ENCODE measurements at regions of chr14 and their contacts with region 1.

Region 1: GRCh38 chr14:91911474-91912032 is 35.9 kb downstream of the FBLN5 start:
- DNase-seq: peak in 4 of 5 donors; percentile 60 to 71 (median 64)
- H3K4me3 ChIP-seq: no peak overlapping the region
- H3K4me3 Mint-ChIP-seq: peak overlapping the region in 2 of 8 donors; percentile 20 to 29
- H3K27ac ChIP-seq: no peak overlapping the region
- H3K27ac Mint-ChIP-seq: peak overlapping the region in 4 of 7 donors; percentile 70 to 82 (median 82)
- H3K4me1 ChIP-seq: peaks cover 8% of the 10 kb centered on the region
- H3K4me1 Mint-ChIP-seq: peaks cover 11 to 13% (median 11%) of the 10 kb centered on the region in 4 donors
- H3K27me3 ChIP-seq: no peaks in the 10 kb centered on the region
- H3K27me3 Mint-ChIP-seq: peaks cover 1 to 5% of the 10 kb centered on the region in 2 donors

Region 2: GRCh38 chr14:91536327-91536726 is 375.2 kb before region 1 on chr14:
- CTCF ChIA-PET with region 1: no interaction called
- POLR2A ChIA-PET with region 1: no interaction called
- intact Hi-C with region 1: no loop called
- DNase-seq: no peak
- H3K4me3 ChIP-seq: no peak overlapping the region
- H3K4me3 Mint-ChIP-seq: no peak overlapping the region
- H3K27ac ChIP-seq: no peak overlapping the region
- H3K27ac Mint-ChIP-seq: no peak overlapping the region
- H3K4me1 ChIP-seq: no peaks in the 10 kb centered on the region
- H3K4me1 Mint-ChIP-seq: no peaks in the 10 kb centered on the region
- H3K27me3 ChIP-seq: no peaks in the 10 kb centered on the region
- H3K27me3 Mint-ChIP-seq: peaks cover 5 to 12% of the 10 kb centered on the region in 2 donors

Region 3: DNA sequence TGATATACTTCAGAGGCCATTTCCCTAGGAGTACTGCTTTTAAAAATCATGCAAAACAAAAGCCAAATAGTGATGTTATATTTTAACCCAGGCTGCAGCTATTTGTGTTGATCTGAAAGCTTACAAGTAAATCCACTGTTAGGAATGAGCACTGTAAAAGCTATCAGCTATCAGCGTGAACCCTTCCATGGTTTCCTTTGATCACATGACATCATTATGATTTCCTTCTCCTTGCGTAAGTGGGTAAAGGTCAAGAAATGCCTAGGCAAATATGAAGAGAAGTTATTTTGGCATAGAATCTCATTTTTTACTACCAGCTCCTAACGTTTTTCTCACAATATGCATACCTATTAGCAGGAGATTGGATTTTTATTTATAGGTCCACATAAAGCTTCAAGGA is 131.1 kb before region 1 on chr14:
- CTCF ChIA-PET with region 1: interaction called, 33 read pairs
- POLR2A ChIA-PET with region 1: no interaction called
- intact Hi-C with region 1: loop called (anchors 5 kb)
- DNase-seq: no peak
- H3K4me3 ChIP-seq: no peak overlapping the region
- H3K4me3 Mint-ChIP-seq: no peak overlapping the region
- H3K27ac ChIP-seq: no peak overlapping the region
- H3K27ac Mint-ChIP-seq: no peak overlapping the region
- H3K4me1 ChIP-seq: no peaks in the 10 kb centered on the region
- H3K4me1 Mint-ChIP-seq: peaks cover 0 to 9% (median under 1%) of the 10 kb centered on the region in 4 donors
- H3K27me3 ChIP-seq: no peaks in the 10 kb centered on the region
- H3K27me3 Mint-ChIP-seq: no peaks in the 10 kb centered on the region

Region 4: DNA sequence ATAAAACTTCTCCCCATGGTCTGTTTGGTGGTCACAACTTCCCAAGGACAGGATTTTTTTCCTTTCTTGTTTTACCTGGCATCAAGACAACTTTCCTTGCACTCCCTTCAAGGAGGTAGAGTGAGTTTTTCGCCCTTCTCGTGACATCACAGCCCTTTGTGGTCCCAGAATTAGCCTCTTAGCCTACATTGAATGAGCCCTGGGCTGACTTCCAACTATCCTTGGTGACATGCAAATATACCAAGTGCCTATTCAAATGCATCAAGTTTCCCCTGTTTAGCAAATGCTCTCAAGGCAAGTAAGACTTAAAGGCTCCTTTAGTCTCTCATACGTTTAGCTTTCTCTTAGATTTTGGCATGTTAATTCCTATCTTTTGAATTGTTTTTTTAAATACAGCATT is 80.8 kb before region 1 on chr14:
- CTCF ChIA-PET with region 1: interaction called, 12 read pairs
- POLR2A ChIA-PET with region 1: interaction called, 18 read pairs
- intact Hi-C with region 1: no loop called
- DNase-seq: peak in 1 of 5 donors; percentile 33
- H3K4me3 ChIP-seq: no peak overlapping the region
- H3K4me3 Mint-ChIP-seq: peak overlapping the region in 4 of 8 donors; percentile 18 to 72 (median 46)
- H3K27ac ChIP-seq: no peak overlapping the region
- H3K27ac Mint-ChIP-seq: peak overlapping the region in 3 of 7 donors; percentile 48 to 89 (median 69)
- H3K4me1 ChIP-seq: peaks cover 67% of the 10 kb centered on the region
- H3K4me1 Mint-ChIP-seq: peaks cover 58 to 76% (median 69%) of the 10 kb centered on the region in 4 donors
- H3K27me3 ChIP-seq: no peaks in the 10 kb centered on the region
- H3K27me3 Mint-ChIP-seq: no peaks in the 10 kb centered on the region

Region 5: GRCh38 chr14:91858215-91858905 is 53.2 kb before region 1 on chr14:
- CTCF ChIA-PET with region 1: interaction called, 28 read pairs
- POLR2A ChIA-PET with region 1: interaction called, 7 read pairs
- intact Hi-C with region 1: no loop called
- DNase-seq: peak in 1 of 5 donors; percentile 65
- H3K4me3 ChIP-seq: no peak overlapping the region
- H3K4me3 Mint-ChIP-seq: peak overlapping the region; percentile 7 to 87 (median 54)
- H3K27ac ChIP-seq: no peak overlapping the region
- H3K27ac Mint-ChIP-seq: peak overlapping the region; percentile 77 to 95 (median 89)
- H3K4me1 ChIP-seq: peaks cover 96% of the 10 kb centered on the region
- H3K4me1 Mint-ChIP-seq: peaks cover 68 to 100% (median 91%) of the 10 kb centered on the region in 4 donors
- H3K27me3 ChIP-seq: no peaks in the 10 kb centered on the region
- H3K27me3 Mint-ChIP-seq: no peaks in the 10 kb centered on the region

Region 6: GRCh38 chr14:91893007-91893406 is 18.5 kb before region 1 on chr14:
- CTCF ChIA-PET with region 1: interaction called, 39 read pairs
- POLR2A ChIA-PET with region 1: no interaction called
- intact Hi-C with region 1: no loop called
- DNase-seq: peak in 4 of 5 donors; percentile 30 to 48 (median 41)
- H3K4me3 ChIP-seq: no peak overlapping the region
- H3K4me3 Mint-ChIP-seq: peak overlapping the region in 2 of 8 donors; percentile 43 to 53
- H3K27ac ChIP-seq: no peak overlapping the region
- H3K27ac Mint-ChIP-seq: peak overlapping the region in 3 of 7 donors; percentile 9 to 38 (median 36)
- H3K4me1 ChIP-seq: peaks cover 54% of the 10 kb centered on the region
- H3K4me1 Mint-ChIP-seq: peaks cover 29 to 71% (median 48%) of the 10 kb centered on the region in 4 donors
- H3K27me3 ChIP-seq: no peaks in the 10 kb centered on the region
- H3K27me3 Mint-ChIP-seq: no peaks in the 10 kb centered on the region